T-cell (primary cell): ENCODE measurements at regions of chr5 and their contacts with region 1.

Region 1: DNA sequence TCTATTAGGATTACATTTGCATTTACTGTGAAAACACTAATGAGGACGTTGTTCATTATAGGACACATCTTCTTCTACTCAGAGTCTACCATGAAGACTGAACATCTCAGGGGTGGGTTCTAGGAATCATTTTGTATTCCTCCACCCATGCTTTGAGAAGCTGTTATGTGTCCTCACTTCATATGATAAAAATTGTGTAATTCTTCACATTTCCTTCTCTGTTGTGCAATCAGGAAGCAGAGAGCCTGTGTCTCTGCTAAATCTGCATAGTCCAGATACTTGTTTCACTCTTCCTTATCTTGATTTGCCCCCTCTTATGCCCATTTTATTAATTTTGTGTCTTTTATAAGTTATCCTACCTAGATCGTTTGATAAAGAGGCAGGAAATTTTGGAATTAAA is 97.8 kb upstream of the IQGAP2 start:
- DNase-seq: no peak
- ATAC-seq: no peak
- H3K4me3 ChIP-seq: no peak overlapping the region
- H3K4me3 Mint-ChIP-seq: no peak overlapping the region
- H3K27ac ChIP-seq: no peak overlapping the region
- H3K27ac Mint-ChIP-seq: no peak overlapping the region
- H3K4me1 ChIP-seq: peaks cover 0 to 9% of the 10 kb centered on the region in 2 experiments
- H3K4me1 Mint-ChIP-seq: peaks cover 18 to 35% (median 18%) of the 10 kb centered on the region in 3 donors
- H3K27me3 ChIP-seq: no peaks in the 10 kb centered on the region
- H3K27me3 Mint-ChIP-seq: peaks cover 0 to 1% of the 10 kb centered on the region in 2 donors

Region 2: DNA sequence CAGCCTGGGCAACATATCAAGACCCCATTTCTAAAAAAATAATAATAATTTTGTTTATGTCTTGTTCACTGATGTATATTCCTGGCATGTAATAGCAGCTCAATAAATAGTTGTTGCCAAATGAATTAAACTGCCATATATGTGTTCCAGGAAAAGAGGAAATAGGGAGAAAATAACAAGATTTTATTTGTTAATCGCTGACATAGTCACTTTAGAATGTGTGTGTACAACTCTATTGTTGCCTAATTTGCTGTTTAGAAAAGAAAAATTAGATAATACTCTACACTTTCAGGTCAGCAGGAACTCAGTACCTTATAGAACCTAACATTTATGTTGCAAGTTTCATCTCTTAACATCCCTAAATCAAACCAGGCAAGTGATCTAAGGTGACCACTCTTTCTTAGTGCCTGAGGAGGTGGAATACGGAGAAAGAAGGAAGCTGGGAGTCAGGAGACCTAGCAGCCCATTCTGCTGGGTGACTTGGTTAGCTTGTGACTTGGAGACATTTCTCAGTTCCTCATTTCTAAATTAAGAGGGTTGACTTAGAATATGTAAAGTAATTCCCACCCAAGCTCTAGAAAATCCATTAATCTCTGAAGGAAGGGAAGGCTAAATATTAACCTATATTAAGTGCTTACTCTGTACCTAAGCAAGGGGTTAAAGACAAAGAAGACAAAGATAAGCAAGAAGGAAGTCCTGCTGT is 12.5 kb before region 1 on chr5:
- CTCF ChIA-PET with region 1: interaction called in 1 of 2 experiments, 3 read pairs
- POLR2A ChIA-PET with region 1: interaction called in 1 of 2 experiments, 16 read pairs
- DNase-seq: no peak
- ATAC-seq: no peak
- H3K4me3 ChIP-seq: no peak overlapping the region
- H3K4me3 Mint-ChIP-seq: no peak overlapping the region
- H3K27ac ChIP-seq: no peak overlapping the region
- H3K27ac Mint-ChIP-seq: no peak overlapping the region
- H3K4me1 ChIP-seq: no peaks in the 10 kb centered on the region
- H3K4me1 Mint-ChIP-seq: peaks cover 0 to 5% (median 3%) of the 10 kb centered on the region in 3 donors
- H3K27me3 ChIP-seq: no peaks in the 10 kb centered on the region
- H3K27me3 Mint-ChIP-seq: no peaks in the 10 kb centered on the region